Activated naive CD4-positive, alpha-beta T cell treated with anti-CD3 and anti-CD28 coated beads for 36 hours (primary cell): ENCODE measurements at regions of chr9 and their contacts with region 1.

Region 1: GRCh38 chr9:105557771-105558610 is at the start of gene FKTN:
- DNase-seq: peak; percentile 88
- H3K4me3 Mint-ChIP-seq: peak within 1 kb of the TSS; percentile 85
- H3K27ac Mint-ChIP-seq: peak within 1 kb of the TSS; percentile 77
- H3K4me1 Mint-ChIP-seq: peaks cover 16% of the 10 kb centered on the region
- H3K27me3 Mint-ChIP-seq: no peaks in the 10 kb centered on the region
- total RNA-seq, gene FKTN: 8.0 to 9.6 TPM

Region 2: DNA sequence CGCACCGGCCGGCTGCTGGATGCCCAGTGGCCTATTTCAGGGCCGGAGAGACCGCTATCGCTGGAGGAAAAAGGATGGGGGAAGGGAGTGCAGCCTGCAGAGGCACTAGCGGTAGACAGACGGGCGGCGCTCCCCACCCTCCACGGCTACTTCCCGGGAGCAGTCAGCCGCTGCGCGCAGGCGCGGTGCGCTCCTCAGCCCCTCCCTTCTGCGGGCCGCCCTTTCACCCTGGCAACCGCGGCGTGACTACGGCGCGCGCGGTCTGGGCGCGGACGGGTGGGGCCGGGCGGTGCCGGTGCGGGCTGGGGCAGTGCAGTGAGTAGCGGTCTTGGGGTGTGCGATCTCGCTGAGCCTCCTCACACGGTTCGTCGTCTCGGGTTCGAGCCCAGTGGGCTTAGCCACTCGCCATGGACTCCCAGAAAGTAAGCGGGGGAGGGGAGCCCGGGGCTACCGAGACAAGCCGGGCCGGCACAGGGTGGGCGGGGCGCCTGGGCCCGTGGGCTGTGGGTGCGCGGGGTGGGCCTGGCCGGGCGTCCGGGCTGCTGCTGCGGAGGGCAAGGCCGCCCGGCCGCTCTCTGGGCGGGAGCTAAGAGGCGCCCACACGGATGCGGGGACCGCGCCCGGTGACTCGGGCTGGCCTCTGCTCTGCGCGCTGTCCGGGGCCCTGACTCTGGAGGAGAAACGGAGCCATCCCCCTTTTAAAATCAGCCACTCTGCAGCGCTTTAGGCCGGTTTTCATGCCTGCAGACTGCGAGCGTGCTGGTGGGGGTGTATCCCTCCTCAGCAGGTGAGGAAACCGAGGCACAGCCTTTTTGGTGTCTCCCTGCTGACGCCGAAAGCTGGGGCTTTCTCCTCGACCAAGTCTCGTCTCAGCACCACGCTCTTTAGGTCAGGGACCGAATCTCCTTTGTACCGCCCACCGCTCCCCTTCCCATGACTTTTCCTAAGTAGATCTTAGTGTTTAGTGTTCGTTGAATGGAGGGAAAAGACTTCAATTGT is 109.9 kb before region 1 on chr9 and contains the start of gene FSD1L:
- CTCF ChIA-PET with region 1: no interaction called
- intact Hi-C with region 1: loop called (anchors 1 kb)
- DNase-seq: peak; percentile 87
- H3K4me3 Mint-ChIP-seq: peak within 1 kb of the TSS; percentile 79
- H3K27ac Mint-ChIP-seq: no peak within 1 kb of the TSS
- H3K4me1 Mint-ChIP-seq: peaks cover 10% of the 10 kb centered on the region
- H3K27me3 Mint-ChIP-seq: no peaks in the 10 kb centered on the region
- total RNA-seq, gene FSD1L: 0.79 to 0.86 TPM

Region 3: DNA sequence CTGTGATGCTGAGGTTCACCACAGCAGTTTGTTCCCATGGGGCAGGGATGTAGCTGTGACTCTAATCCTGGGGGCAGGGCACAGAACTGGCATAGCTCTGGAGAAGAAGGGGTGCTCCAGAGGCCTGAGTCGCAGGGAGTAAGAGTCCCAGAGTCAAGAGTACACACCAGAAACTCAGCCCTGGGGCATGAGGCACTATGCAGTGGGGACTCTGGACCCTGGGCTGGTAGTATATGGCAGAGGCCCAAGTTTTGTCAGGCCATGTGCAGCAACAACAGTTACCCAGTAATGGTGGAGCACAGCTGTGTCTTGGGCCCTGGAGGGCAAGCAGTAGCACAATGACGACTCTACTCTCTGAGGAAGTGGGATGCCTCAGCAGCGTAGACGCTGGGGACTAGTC is 179.2 kb after region 1 on chr9:
- CTCF ChIA-PET with region 1: no interaction called
- intact Hi-C with region 1: no loop called
- DNase-seq: no peak
- H3K4me3 Mint-ChIP-seq: no peak overlapping the region
- H3K27ac Mint-ChIP-seq: no peak overlapping the region
- H3K4me1 Mint-ChIP-seq: no peaks in the 10 kb centered on the region
- H3K27me3 Mint-ChIP-seq: no peaks in the 10 kb centered on the region